ENCODE measurements at regions of chr10 and their contacts with region 1.

Region 1: GRCh38 chr10:72088889-72089575 is 681 bp upstream of the SPOCK2 start:
- DNase-seq: peak in 1 of 5 donors; percentile 78
- H3K4me3 ChIP-seq: peak overlapping the region; percentile 82 to 98
- H3K4me3 Mint-ChIP-seq: peak overlapping the region; percentile 97 to 100 (median 100)
- H3K27ac ChIP-seq: peak overlapping the region; percentile 94
- H3K27ac Mint-ChIP-seq: peak overlapping the region; percentile 97 to 100 (median 100)
- H3K4me1 ChIP-seq: peaks cover 48% of the 10 kb centered on the region
- H3K4me1 Mint-ChIP-seq: peaks cover 31 to 58% (median 43%) of the 10 kb centered on the region in 4 donors
- H3K27me3 ChIP-seq: no peaks in the 10 kb centered on the region
- H3K27me3 Mint-ChIP-seq: peaks cover 0 to 2% of the 10 kb centered on the region in 2 donors

Region 2: GRCh38 chr10:71531485-71532446 is 557.3 kb before region 1 on chr10:
- CTCF ChIA-PET with region 1: no interaction called
- POLR2A ChIA-PET with region 1: no interaction called
- intact Hi-C with region 1: no loop called
- DNase-seq: peak in 1 of 5 donors; percentile 8
- H3K4me3 ChIP-seq: no peak overlapping the region
- H3K4me3 Mint-ChIP-seq: no peak overlapping the region
- H3K27ac ChIP-seq: no peak overlapping the region
- H3K27ac Mint-ChIP-seq: no peak overlapping the region
- H3K4me1 ChIP-seq: no peaks in the 10 kb centered on the region
- H3K4me1 Mint-ChIP-seq: peaks cover 2 to 5% (median 4%) of the 10 kb centered on the region in 4 donors
- H3K27me3 ChIP-seq: no peaks in the 10 kb centered on the region
- H3K27me3 Mint-ChIP-seq: no peaks in the 10 kb centered on the region

Region 3: DNA sequence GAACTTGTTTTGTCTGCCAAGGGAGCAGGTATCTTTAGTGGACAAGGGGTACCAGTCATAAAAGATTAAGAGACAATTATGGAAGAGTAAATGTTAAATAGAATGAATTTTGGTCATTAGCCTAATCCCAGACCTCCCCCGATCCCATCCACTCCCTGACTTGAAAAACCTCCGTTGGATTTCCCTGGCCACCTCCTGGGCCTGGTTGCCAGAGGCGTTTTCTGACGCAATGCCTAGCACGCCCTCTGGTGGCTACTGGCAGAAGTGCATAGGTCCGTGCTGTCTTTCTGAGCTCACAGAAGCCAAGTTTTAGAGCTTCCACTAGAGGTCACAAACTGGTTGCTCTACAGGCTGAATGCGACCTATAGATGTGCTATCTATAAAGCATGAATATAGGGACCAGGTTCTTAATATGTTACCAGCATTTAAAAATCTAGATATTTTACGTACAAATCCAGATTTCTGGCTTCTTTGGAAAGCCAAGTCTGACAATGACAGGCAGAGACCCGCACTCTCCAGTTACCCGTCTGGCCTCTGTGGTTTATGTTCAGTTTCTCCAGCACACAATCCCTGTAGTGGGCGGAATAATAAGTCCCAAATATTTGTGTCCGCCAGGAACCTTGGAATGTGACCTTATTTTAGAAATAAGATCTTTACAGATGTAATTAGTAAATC is 40.4 kb before region 1 on chr10:
- CTCF ChIA-PET with region 1: interaction called, 16 read pairs
- POLR2A ChIA-PET with region 1: interaction called, 13 read pairs
- intact Hi-C with region 1: loop called (anchors 1 kb)
- DNase-seq: peak; percentile 81 to 84 (median 81)
- H3K4me3 ChIP-seq: no peak overlapping the region
- H3K4me3 Mint-ChIP-seq: no peak overlapping the region
- H3K27ac ChIP-seq: no peak overlapping the region
- H3K27ac Mint-ChIP-seq: peak overlapping the region in 3 of 7 donors; percentile 20 to 78 (median 70)
- H3K4me1 ChIP-seq: no peaks in the 10 kb centered on the region
- H3K4me1 Mint-ChIP-seq: peaks cover 1 to 8% (median 6%) of the 10 kb centered on the region in 4 donors
- H3K27me3 ChIP-seq: no peaks in the 10 kb centered on the region
- H3K27me3 Mint-ChIP-seq: no peaks in the 10 kb centered on the region

Region 4: DNA sequence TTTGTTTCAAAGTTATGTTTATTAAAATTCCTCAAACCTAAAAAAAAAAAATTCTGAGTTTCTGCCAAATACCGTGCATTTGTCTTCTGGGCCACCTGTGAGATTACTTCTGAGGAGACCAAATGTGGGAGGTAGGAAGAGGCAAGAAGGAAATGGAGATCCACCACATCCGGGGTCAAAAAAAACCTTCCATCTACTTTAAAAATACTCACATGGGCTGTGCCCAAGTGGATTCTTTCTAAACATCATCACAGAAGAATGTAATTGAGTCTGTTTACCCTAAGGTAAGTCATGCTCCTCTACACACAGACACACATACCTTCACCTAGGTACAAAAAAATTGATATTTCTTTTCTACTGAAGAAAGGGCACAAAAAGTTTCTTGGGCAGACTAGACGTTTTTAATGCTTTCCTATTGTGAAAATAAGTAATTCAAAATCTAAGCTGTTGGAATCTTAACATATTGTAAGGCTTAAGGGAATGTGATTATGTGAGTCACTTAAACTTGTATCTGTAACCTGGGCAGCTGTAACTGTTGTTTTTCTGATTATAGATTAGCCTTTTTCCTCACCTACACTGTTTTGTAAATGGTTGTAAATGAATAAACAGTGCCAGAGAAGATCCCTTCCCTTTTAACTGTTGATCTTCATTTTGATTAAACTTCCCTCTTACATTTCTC is 18.4 kb after region 1 on chr10:
- CTCF ChIA-PET with region 1: interaction called, 8 read pairs
- POLR2A ChIA-PET with region 1: interaction called, 230 read pairs
- intact Hi-C with region 1: loop called (anchors 1 kb)
- DNase-seq: peak; percentile 62 to 72 (median 71)
- H3K4me3 ChIP-seq: peak overlapping the region in 1 of 2 donors; percentile 16
- H3K4me3 Mint-ChIP-seq: peak overlapping the region; percentile 61 to 87 (median 81)
- H3K27ac ChIP-seq: peak overlapping the region; percentile 53
- H3K27ac Mint-ChIP-seq: peak overlapping the region; percentile 81 to 97 (median 90)
- H3K4me1 ChIP-seq: peaks cover 78% of the 10 kb centered on the region
- H3K4me1 Mint-ChIP-seq: peaks cover 61 to 91% (median 80%) of the 10 kb centered on the region in 4 donors
- H3K27me3 ChIP-seq: no peaks in the 10 kb centered on the region
- H3K27me3 Mint-ChIP-seq: no peaks in the 10 kb centered on the region

Region 5: GRCh38 chr10:72126184-72126871 is 37.3 kb after region 1 on chr10:
- CTCF ChIA-PET with region 1: interaction called, 24 read pairs
- POLR2A ChIA-PET with region 1: interaction called, 37 read pairs
- intact Hi-C with region 1: loop called (anchors 5 kb)
- DNase-seq: peak in 3 of 5 donors; percentile 16 to 28 (median 25)
- H3K4me3 ChIP-seq: no peak overlapping the region
- H3K4me3 Mint-ChIP-seq: no peak overlapping the region
- H3K27ac ChIP-seq: no peak overlapping the region
- H3K27ac Mint-ChIP-seq: peak overlapping the region in 5 of 7 donors; percentile 25 to 87 (median 38)
- H3K4me1 ChIP-seq: peaks cover 29% of the 10 kb centered on the region
- H3K4me1 Mint-ChIP-seq: peaks cover 24 to 34% (median 26%) of the 10 kb centered on the region in 4 donors
- H3K27me3 ChIP-seq: no peaks in the 10 kb centered on the region
- H3K27me3 Mint-ChIP-seq: no peaks in the 10 kb centered on the region

Region 6: GRCh38 chr10:72248468-72249151 is 159.6 kb after region 1 on chr10:
- CTCF ChIA-PET with region 1: no interaction called
- POLR2A ChIA-PET with region 1: interaction called, 16 read pairs
- intact Hi-C with region 1: no loop called
- DNase-seq: peak; percentile 85 to 90 (median 87)
- H3K4me3 ChIP-seq: peak overlapping the region; percentile 31 to 33
- H3K4me3 Mint-ChIP-seq: peak overlapping the region; percentile 83 to 92 (median 86)
- H3K27ac ChIP-seq: peak overlapping the region; percentile 55
- H3K27ac Mint-ChIP-seq: peak overlapping the region; percentile 95 to 98 (median 96)
- H3K4me1 ChIP-seq: peaks cover 96% of the 10 kb centered on the region
- H3K4me1 Mint-ChIP-seq: peaks cover 58 to 91% (median 77%) of the 10 kb centered on the region in 4 donors
- H3K27me3 ChIP-seq: no peaks in the 10 kb centered on the region
- H3K27me3 Mint-ChIP-seq: no peaks in the 10 kb centered on the region

Region 7: DNA sequence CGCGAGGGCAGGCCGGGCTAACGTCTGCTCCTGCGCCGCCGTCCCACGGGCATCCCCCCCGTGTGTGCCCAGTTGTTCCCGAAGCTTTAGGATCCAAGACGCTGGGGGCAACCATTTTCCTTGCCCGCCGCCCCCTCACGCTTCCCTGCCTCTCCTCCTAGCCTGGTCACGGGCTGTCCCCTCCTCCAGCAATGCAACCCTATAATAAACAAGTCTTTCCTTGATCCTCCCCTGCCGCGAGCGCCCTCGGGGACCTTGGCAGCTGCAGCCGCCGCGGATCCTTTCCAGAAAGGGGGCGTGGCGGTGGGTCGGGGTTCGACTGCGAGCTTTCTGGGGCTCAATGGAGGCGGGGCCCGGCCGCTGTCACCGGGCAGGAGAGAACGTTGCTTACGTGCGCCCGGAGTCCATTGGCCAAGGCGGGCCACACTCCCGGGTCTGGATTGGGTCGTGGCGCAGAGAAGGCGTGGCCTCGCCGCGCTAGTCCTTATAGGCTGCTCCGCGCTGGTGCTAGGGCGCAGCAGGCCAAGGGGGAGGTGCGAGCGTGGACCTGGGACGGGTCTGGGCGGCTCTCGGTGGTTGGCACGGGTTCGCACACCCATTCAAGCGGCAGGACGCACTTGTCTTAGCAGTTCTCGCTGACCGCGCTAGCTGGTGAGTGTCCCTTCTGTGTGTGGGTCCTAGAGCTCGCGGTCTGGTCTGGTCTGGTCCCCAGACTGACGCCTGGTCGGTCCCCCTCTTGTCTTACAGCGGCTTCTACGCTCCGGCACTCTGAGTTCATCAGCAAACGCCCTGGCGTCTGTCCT is 184.6 kb after region 1 on chr10 and contains the start of gene DDIT4:
- CTCF ChIA-PET with region 1: interaction called, 4 read pairs
- POLR2A ChIA-PET with region 1: interaction called, 31 read pairs
- intact Hi-C with region 1: no loop called
- DNase-seq: peak; percentile 95 to 98 (median 96)
- H3K4me3 ChIP-seq: peak within 1 kb of the TSS; percentile 99 to 100
- H3K4me3 Mint-ChIP-seq: peak within 1 kb of the TSS; percentile 96 to 100 (median 98)
- H3K27ac ChIP-seq: peak within 1 kb of the TSS; percentile 99
- H3K27ac Mint-ChIP-seq: peak within 1 kb of the TSS; percentile 83 to 99 (median 96)
- H3K4me1 ChIP-seq: peaks cover 51% of the 10 kb centered on the region
- H3K4me1 Mint-ChIP-seq: peaks cover 23 to 60% (median 39%) of the 10 kb centered on the region in 4 donors
- H3K27me3 ChIP-seq: no peaks in the 10 kb centered on the region
- H3K27me3 Mint-ChIP-seq: no peaks in the 10 kb centered on the region
- total RNA-seq, gene DDIT4: 23.1 to 24.5 TPM

Region 8: GRCh38 chr10:72319416-72320254 is 230.6 kb after region 1 on chr10:
- CTCF ChIA-PET with region 1: no interaction called
- POLR2A ChIA-PET with region 1: interaction called, 19 read pairs
- intact Hi-C with region 1: no loop called
- DNase-seq: peak; percentile 87 to 91 (median 89)
- H3K4me3 ChIP-seq: peak overlapping the region; percentile 46 to 55
- H3K4me3 Mint-ChIP-seq: peak overlapping the region; percentile 79 to 89 (median 84)
- H3K27ac ChIP-seq: peak overlapping the region; percentile 89
- H3K27ac Mint-ChIP-seq: peak overlapping the region; percentile 96 to 99 (median 99)
- H3K4me1 ChIP-seq: peaks cover 95% of the 10 kb centered on the region
- H3K4me1 Mint-ChIP-seq: peaks cover 53 to 92% (median 74%) of the 10 kb centered on the region in 4 donors
- H3K27me3 ChIP-seq: no peaks in the 10 kb centered on the region
- H3K27me3 Mint-ChIP-seq: no peaks in the 10 kb centered on the region

Region 9: DNA sequence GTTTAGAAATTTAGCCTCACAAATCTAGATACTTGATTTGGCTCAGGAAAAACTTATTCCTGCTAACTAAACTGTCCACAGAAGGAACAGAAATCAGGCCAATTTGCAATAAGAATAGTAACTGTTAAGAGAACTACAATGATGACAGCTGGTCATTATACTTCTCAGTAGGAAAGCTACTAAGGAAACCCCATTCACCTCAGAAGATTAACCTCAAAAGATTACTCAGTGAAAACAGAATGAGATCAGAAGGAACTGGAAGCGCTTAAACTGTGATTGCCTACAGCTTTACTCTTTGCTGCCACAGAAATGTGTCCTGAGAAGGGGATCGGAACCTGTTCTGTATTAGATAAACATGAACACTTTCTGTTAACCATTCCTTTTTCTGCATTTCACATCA is 290.0 kb after region 1 on chr10:
- CTCF ChIA-PET with region 1: no interaction called
- POLR2A ChIA-PET with region 1: no interaction called
- intact Hi-C with region 1: no loop called
- DNase-seq: no peak
- H3K4me3 ChIP-seq: no peak overlapping the region
- H3K4me3 Mint-ChIP-seq: no peak overlapping the region
- H3K27ac ChIP-seq: no peak overlapping the region
- H3K27ac Mint-ChIP-seq: no peak overlapping the region
- H3K4me1 ChIP-seq: no peaks in the 10 kb centered on the region
- H3K4me1 Mint-ChIP-seq: peaks cover 0 to 1% (median 0%) of the 10 kb centered on the region in 4 donors
- H3K27me3 ChIP-seq: no peaks in the 10 kb centered on the region
- H3K27me3 Mint-ChIP-seq: no peaks in the 10 kb centered on the region

Measured in CD4-positive, alpha-beta memory T cell (primary cell).